Spleen (tissue), 13 donors: ENCODE measurements at regions of chr3 and their contacts with region 1.

Region 1: DNA sequence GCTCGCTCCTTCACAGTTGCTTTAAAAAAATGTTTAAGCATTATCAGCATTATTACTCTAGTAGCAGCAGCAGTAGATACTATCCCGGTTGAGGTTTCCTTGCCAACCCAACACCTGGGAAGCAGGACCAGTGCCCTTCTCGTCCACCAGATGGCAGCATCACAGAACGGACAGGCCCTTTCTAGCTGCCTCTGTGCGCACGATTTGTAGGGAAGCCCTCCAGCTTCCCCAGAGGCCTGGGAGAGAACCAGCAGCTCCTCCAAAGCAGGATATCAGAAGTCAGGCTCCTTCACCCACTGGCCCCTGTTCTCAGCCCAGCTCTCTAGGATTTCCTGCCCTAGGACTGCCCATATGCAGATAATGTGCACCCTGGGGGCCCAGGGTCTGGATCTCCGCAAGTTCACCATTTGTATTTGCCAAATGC is 16.8 kb upstream of the ESYT3 start:
- DNase-seq: no peak
- H3K4me3 ChIP-seq: no peak overlapping the region
- H3K27ac ChIP-seq: no peak overlapping the region
- H3K4me1 ChIP-seq: peaks cover 0 to 7% (median 2%) of the 10 kb centered on the region in 6 donors
- H3K27me3 ChIP-seq: peaks cover 0 to 32% (median 0%) of the 10 kb centered on the region in 7 donors
- CTCF ChIP-seq: peak; percentile 59 to 92 (median 85)
- POLR2A ChIP-seq: no peak

Region 2: DNA sequence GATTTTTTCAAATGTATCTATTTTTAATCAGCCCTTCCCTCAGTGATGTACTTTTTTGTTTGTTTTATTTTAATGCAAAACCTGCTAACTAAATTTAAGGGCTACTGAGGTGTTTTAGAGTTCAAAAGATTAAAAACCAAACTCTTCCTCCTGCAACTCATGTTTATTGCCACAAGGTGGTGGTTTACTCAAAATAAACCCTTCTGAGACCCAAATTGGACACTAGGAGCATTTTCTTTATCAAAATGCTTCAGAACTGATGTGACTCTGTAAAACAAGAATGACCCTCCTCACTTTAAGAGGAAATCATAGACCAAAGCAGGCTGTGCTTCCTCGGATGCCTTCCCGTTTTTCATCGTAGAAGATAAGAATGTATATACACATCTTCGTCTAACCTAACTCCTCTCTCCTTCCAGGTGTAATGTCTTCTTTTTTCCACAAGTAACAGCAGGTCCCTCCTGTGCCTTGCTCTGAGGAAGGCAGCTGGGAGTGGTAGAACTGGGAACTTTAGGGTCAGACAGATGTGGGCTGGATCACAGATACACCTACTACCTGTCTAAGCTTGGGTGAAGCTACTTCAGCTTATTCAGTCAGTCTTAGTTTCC is 85.0 kb before region 1 on chr3:
- intact Hi-C with region 1: loop called (anchors 5 kb)
- DNase-seq: no peak
- H3K4me3 ChIP-seq: no peak overlapping the region
- H3K27ac ChIP-seq: no peak overlapping the region
- H3K4me1 ChIP-seq: peaks cover 8 to 21% (median 17%) of the 10 kb centered on the region in 6 donors
- H3K27me3 ChIP-seq: peaks cover 0 to 4% (median 0%) of the 10 kb centered on the region in 7 donors
- CTCF ChIP-seq: peak in 9 of 11 experiments; percentile 22 to 63 (median 57)
- POLR2A ChIP-seq: no peak

Region 3: DNA sequence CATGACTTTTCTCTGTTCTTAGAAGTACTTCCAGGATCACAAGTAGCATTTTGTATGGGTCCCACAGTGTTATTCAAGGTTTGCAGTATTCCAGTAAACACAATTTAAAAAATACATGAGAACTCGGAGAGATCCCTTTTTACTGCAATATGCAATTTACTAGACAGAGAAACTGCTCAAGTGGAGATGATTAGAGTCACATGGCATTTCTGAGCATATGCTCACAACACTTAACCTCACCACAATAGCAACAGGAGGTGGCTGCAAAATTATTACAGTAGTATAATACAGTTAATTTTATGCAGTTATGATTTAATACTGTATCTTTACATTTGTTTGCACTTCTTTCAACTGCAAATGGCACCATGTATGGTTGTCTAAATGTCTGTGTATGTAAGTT is 329.7 kb after region 1 on chr3:
- intact Hi-C with region 1: no loop called
- DNase-seq: no peak
- H3K4me3 ChIP-seq: no peak overlapping the region
- H3K27ac ChIP-seq: no peak overlapping the region
- H3K4me1 ChIP-seq: peaks cover 0 to 7% (median 0%) of the 10 kb centered on the region in 6 donors
- H3K27me3 ChIP-seq: no peaks in the 10 kb centered on the region
- CTCF ChIP-seq: no peak
- POLR2A ChIP-seq: no peak

Region 4: GRCh38 chr3:138923531-138923994 is 506.0 kb after region 1 on chr3:
- intact Hi-C with region 1: loop called (anchors 5 kb)
- DNase-seq: peak; percentile 91
- H3K4me3 ChIP-seq: no peak overlapping the region
- H3K27ac ChIP-seq: no peak overlapping the region
- H3K4me1 ChIP-seq: peaks cover 0 to 6% (median 4%) of the 10 kb centered on the region in 6 donors
- H3K27me3 ChIP-seq: peaks cover 0 to 33% (median 3%) of the 10 kb centered on the region in 7 donors
- CTCF ChIP-seq: peak; percentile 81 to 92 (median 89)
- POLR2A ChIP-seq: no peak